Body of pancreas (tissue), 4 donors: ENCODE measurements at regions of chr11 and their contacts with region 1.

Region 1: GRCh38 chr11:72585762-72586311 is 88.4 kb downstream of the PDE2A start:
- DNase-seq: peak; percentile 71 to 82 (median 82)
- ATAC-seq: peak; percentile 74
- H3K4me3 ChIP-seq: no peak overlapping the region
- H3K27ac ChIP-seq: no peak overlapping the region
- H3K4me1 ChIP-seq: peaks cover 19% of the 10 kb centered on the region
- H3K27me3 ChIP-seq: peaks cover 0 to 12% of the 10 kb centered on the region in 2 donors
- CTCF ChIP-seq: peak; percentile 87 to 93 (median 90)
- POLR2A ChIP-seq: no peak

Region 2: DNA sequence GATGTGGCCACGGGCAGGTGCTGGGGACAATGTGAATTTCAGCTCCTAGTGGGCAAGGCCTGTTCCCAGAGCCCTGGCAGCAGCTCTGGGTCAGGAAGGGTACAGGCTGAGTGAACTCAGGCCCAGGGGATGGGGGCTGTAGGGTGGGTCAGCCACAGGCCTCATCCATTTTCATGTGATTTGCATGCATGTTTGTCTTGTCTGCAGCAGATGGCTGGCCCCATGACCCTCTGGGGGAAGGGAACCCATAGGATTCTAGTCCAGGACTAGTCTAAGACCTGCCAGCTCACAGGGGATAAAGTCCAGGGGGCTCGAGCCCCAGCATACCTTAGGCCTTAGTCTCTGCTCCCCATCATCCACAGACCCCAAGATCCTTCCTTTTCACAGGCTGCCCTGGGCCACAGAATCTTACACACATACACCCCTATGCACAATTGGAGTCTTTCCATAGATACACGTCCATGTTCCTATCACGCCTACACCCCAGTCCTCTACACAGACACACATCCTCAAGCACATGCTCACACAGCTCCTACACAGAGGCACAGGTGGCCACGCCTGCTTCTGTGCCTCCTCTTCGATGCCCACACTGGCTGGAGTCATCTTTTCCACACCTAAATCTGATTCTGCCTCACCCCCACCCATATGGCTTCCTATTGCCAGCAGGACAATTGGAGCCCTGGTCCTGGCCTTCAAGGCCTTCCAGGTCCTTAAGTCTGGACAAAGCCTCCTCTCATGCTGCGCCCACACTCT is 62.7 kb after region 1 on chr11:
- intact Hi-C with region 1: loop called (anchors 5 kb)
- DNase-seq: no peak
- ATAC-seq: no peak
- H3K4me3 ChIP-seq: no peak overlapping the region
- H3K27ac ChIP-seq: no peak overlapping the region
- H3K4me1 ChIP-seq: no peaks in the 10 kb centered on the region
- H3K27me3 ChIP-seq: no peaks in the 10 kb centered on the region
- CTCF ChIP-seq: no peak
- POLR2A ChIP-seq: no peak

Region 3: GRCh38 chr11:72683782-72684200 is 98.0 kb after region 1 on chr11:
- intact Hi-C with region 1: loop called (anchors 5 kb)
- DNase-seq: peak; percentile 58 to 74 (median 64)
- ATAC-seq: peak; percentile 54
- H3K4me3 ChIP-seq: no peak overlapping the region
- H3K27ac ChIP-seq: no peak overlapping the region
- H3K4me1 ChIP-seq: no peaks in the 10 kb centered on the region
- H3K27me3 ChIP-seq: peaks cover 0 to 4% of the 10 kb centered on the region in 2 donors
- CTCF ChIP-seq: peak; percentile 61 to 86 (median 80)
- POLR2A ChIP-seq: no peak